OCI-LY7 (cell line): ENCODE measurements at regions of chr11 and their contacts with region 1.

Region 1: DNA sequence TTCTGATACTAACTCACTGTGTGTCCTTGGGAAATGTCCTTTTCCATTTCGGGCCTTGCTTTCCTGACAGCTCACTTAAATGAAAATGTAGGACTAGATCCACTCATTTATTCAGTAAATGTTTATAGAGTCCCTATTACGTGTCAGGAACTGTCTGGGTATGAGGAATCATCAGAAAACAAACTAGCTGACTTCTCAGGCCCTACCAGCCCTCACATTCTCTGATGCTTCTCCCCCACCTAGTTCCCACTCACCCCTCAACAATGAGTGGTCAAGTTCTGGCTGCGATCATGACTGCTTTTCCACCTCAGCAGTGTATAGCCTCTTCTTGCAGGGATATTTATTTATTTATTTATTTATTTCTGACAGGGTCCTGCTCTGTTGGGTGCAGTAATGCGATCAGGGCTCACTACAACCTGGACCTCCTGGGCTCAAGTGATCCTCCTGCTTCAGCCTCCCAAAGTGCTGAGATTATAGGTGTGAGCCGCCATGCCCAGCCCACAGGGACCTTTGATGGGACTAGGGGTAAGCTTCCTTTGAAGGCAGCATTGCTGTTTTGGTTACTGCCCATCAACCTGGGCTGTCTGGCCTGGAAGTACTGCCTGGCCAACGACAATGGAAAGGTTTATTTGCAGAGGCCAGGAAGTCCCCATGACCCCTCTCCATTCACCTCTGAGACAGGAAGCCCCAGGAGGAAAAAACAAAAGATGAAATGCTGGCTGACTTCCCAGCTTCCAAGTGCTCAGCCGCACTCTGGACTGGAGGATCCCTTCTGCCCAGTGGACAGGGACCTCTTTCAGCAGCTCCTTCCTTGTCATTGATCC is 33.1 kb upstream of the POLD3 start:
- DNase-seq: no peak
- H3K4me3 ChIP-seq: no peak overlapping the region
- H3K27ac ChIP-seq: no peak overlapping the region
- H3K4me1 ChIP-seq: no peaks in the 10 kb centered on the region
- CTCF ChIP-seq: no peak

Region 2: GRCh38 chr11:74462009-74462408 is 97.3 kb before region 1 on chr11:
- CTCF ChIA-PET with region 1: no interaction called
- POLR2A ChIA-PET with region 1: interaction called, 6 read pairs
- intact Hi-C with region 1: loop called (anchors 5 kb)
- DNase-seq: no peak
- H3K4me3 ChIP-seq: no peak overlapping the region
- H3K27ac ChIP-seq: no peak overlapping the region
- H3K4me1 ChIP-seq: peaks cover 3% of the 10 kb centered on the region
- CTCF ChIP-seq: no peak

Region 3: DNA sequence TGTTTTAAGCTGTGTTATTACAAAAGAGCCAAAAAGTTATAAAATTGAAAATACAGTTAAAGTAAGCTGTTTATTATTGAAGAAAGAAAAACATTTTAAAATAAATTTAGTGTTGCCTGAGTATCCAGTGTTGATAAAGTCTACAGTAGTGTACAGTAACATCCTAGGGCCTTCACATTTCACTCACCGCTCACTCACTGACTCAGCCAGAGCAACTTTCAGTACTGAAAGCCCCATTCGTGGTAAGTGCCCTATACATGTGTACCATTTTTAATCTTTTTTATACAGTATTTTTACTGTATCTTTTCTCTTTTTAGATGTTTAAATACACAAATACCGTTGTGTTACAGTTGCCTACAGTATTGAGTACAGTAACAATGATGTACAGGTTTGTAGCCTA is 68.1 kb after region 1 on chr11:
- CTCF ChIA-PET with region 1: no interaction called
- POLR2A ChIA-PET with region 1: no interaction called
- intact Hi-C with region 1: no loop called
- DNase-seq: no peak
- H3K4me3 ChIP-seq: no peak overlapping the region
- H3K27ac ChIP-seq: no peak overlapping the region
- H3K4me1 ChIP-seq: peaks cover 7% of the 10 kb centered on the region
- CTCF ChIP-seq: no peak

Region 4: GRCh38 chr11:75013051-75013450 is 453.7 kb after region 1 on chr11:
- CTCF ChIA-PET with region 1: no interaction called
- POLR2A ChIA-PET with region 1: no interaction called
- intact Hi-C with region 1: no loop called
- DNase-seq: no peak
- H3K4me3 ChIP-seq: no peak overlapping the region
- H3K27ac ChIP-seq: no peak overlapping the region
- H3K4me1 ChIP-seq: no peaks in the 10 kb centered on the region
- CTCF ChIP-seq: no peak